ENCODE measurements at regions of chr17 and their contacts with region 1.

Region 1: GRCh38 chr17:40536295-40537171 is 28.7 kb downstream of the CCR7 start:
- DNase-seq: peak; percentile 94
- H3K4me3 Mint-ChIP-seq: peak overlapping the region; percentile 40
- H3K27ac Mint-ChIP-seq: no peak overlapping the region
- H3K4me1 Mint-ChIP-seq: peaks cover 38% of the 10 kb centered on the region
- H3K27me3 Mint-ChIP-seq: no peaks in the 10 kb centered on the region
- CTCF ChIP-seq: no peak

Region 2: DNA sequence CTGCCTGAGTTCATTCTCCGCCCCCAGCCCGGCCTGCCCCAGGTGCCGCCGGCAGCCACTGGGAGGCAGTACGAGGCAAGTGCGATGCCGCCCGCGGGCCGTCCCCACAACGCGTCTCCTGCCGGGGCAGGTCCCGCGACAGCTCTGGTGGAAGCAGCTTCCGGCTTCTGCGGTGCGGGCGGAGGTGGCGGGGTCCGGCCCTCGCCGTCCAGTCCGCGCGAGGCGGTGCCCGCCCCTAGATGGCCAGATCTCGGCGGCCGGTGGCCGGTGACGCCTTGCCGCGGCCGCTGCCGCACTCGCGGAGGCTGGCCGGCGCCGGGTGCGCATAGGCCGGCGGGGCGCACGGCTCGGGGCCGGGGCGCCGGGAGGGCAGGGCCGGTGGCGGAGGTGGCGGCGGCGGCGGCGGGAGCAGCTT is 173.8 kb before region 1 on chr17:
- CTCF ChIA-PET with region 1: interaction called, 11 read pairs
- POLR2A ChIA-PET with region 1: interaction called, 3 read pairs
- intact Hi-C with region 1: loop called (anchors 1 kb)
- DNase-seq: peak; percentile 74
- H3K4me3 Mint-ChIP-seq: peak overlapping the region; percentile 69
- H3K27ac Mint-ChIP-seq: no peak overlapping the region
- H3K4me1 Mint-ChIP-seq: peaks cover 11% of the 10 kb centered on the region
- H3K27me3 Mint-ChIP-seq: no peaks in the 10 kb centered on the region
- CTCF ChIP-seq: peak; percentile 72

Region 3: DNA sequence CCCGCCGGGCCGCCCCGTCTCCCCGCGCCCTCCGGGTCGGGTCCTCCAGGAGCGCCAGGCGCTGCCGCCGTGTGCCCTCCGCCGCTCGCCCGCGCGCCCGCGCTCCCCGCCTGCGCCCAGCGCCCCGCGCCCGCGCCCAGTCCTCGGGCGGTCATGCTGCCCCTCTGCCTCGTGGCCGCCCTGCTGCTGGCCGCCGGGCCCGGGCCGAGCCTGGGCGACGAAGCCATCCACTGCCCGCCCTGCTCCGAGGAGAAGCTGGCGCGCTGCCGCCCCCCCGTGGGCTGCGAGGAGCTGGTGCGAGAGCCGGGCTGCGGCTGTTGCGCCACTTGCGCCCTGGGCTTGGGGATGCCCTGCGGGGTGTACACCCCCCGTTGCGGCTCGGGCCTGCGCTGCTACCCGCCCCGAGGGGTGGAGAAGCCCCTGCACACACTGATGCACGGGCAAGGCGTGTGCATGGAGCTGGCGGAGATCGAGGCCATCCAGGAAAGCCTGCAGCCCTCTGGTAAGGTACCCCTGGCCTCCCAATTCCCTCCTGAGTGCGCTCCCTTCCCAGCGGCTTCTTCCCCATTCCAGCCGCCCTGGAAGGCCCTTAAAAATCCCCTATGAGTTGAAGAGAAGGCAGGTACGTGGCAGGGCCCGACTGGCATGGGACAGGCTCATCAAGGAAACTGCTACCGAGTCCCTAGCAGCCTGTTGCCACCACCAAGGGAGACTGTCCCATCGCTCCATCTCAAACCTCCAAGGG is 92.8 kb before region 1 on chr17:
- CTCF ChIA-PET with region 1: interaction called, 97 read pairs
- POLR2A ChIA-PET with region 1: interaction called, 8 read pairs
- intact Hi-C with region 1: loop called (anchors 1 kb)
- DNase-seq: peak; percentile 72
- H3K4me3 Mint-ChIP-seq: peak overlapping the region; percentile 65
- H3K27ac Mint-ChIP-seq: no peak overlapping the region
- H3K4me1 Mint-ChIP-seq: peaks cover 21% of the 10 kb centered on the region
- H3K27me3 Mint-ChIP-seq: peaks cover 31% of the 10 kb centered on the region
- CTCF ChIP-seq: peak; percentile 6

Region 4: GRCh38 chr17:40450175-40450574 is 86.4 kb before region 1 on chr17:
- CTCF ChIA-PET with region 1: interaction called, 12 read pairs
- POLR2A ChIA-PET with region 1: no interaction called
- intact Hi-C with region 1: no loop called
- DNase-seq: peak; percentile 65
- H3K4me3 Mint-ChIP-seq: no peak overlapping the region
- H3K27ac Mint-ChIP-seq: no peak overlapping the region
- H3K4me1 Mint-ChIP-seq: peaks cover 29% of the 10 kb centered on the region
- H3K27me3 Mint-ChIP-seq: peaks cover 21% of the 10 kb centered on the region
- CTCF ChIP-seq: peak; percentile 40

Region 5: GRCh38 chr17:40490289-40490853 is 46.2 kb before region 1 on chr17:
- CTCF ChIA-PET with region 1: interaction called, 9 read pairs
- POLR2A ChIA-PET with region 1: interaction called, 472 read pairs
- intact Hi-C with region 1: loop called (anchors 1 kb)
- DNase-seq: peak; percentile 93
- H3K4me3 Mint-ChIP-seq: peak overlapping the region; percentile 98
- H3K27ac Mint-ChIP-seq: peak overlapping the region; percentile 83
- H3K4me1 Mint-ChIP-seq: peaks cover 70% of the 10 kb centered on the region
- H3K27me3 Mint-ChIP-seq: no peaks in the 10 kb centered on the region
- CTCF ChIP-seq: no peak

Region 6: GRCh38 chr17:40522250-40522952 is 14.1 kb before region 1 on chr17:
- CTCF ChIA-PET with region 1: interaction called, 34 read pairs
- POLR2A ChIA-PET with region 1: interaction called, 21 read pairs
- intact Hi-C with region 1: no loop called
- DNase-seq: peak; percentile 53
- H3K4me3 Mint-ChIP-seq: peak overlapping the region; percentile 62
- H3K27ac Mint-ChIP-seq: peak overlapping the region; percentile 99
- H3K4me1 Mint-ChIP-seq: peaks cover 57% of the 10 kb centered on the region
- H3K27me3 Mint-ChIP-seq: no peaks in the 10 kb centered on the region
- CTCF ChIP-seq: no peak

Region 7: DNA sequence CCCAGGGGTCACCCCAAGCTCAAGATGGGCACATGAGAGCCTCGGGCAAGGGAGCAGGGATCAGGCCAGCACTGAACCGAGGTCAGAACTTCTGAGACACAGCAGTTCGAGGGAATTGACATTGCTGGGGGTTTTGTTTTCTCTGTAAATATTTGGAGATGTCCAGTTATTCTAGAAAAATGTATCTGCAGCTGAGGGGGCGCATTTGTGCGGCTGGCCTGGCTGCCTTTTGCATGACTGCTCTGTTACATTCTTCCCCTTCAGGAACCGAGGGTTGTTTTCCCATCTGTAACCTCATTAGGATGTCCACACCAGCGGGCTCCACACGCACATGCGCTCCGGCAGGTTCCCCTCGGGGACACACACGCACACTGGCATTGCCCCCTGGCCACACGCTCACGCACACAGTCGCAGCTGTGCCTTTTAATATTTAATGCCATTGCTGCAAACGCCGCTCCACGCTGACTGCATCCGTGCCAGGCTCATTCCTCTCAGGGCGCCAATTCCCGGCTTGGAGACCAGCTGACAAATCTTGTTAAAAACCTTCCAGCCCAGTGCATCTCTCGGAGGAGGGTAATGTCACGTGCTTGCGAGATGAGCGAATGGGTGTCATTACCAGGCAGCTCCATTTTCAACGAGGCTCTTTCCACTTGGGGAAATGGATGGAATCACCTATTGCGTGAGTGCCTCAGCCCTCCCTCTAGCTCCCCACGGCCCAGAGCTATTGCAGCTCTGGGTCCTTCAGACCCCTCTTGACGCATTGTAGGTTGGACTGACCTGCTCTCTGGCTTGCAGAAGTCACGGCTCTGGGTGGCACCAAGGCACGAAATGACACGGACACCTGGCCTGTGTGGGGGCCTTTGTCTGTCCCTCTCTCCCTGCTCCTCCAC is 15.6 kb after region 1 on chr17:
- CTCF ChIA-PET with region 1: interaction called, 26 read pairs
- POLR2A ChIA-PET with region 1: interaction called, 49 read pairs
- intact Hi-C with region 1: no loop called
- DNase-seq: peak; percentile 65
- H3K4me3 Mint-ChIP-seq: no peak overlapping the region
- H3K27ac Mint-ChIP-seq: no peak overlapping the region
- H3K4me1 Mint-ChIP-seq: peaks cover 32% of the 10 kb centered on the region
- H3K27me3 Mint-ChIP-seq: no peaks in the 10 kb centered on the region
- CTCF ChIP-seq: no peak

Region 8: DNA sequence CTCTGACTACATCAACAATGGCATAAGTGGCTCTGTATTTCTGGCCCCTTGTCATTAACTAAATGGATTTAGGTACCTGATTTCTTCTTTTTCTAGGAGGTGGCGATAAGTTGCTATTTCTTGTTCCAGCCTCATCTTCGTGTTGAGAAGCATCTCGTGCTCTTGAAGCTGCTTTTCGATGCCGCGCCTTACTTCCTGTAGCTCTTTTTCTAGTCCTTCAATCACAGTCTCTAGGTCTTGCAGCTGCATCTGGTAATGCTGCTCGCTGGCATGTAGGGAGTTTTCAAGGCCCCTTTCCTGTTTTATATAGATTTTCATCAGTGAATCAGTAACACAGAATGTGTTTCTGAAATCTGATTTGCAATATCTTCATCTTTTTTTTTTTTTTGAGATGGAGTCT is 123.4 kb after region 1 on chr17:
- CTCF ChIA-PET with region 1: no interaction called
- POLR2A ChIA-PET with region 1: no interaction called
- intact Hi-C with region 1: no loop called
- DNase-seq: no peak
- H3K4me3 Mint-ChIP-seq: no peak overlapping the region
- H3K27ac Mint-ChIP-seq: no peak overlapping the region
- H3K4me1 Mint-ChIP-seq: peaks cover 2% of the 10 kb centered on the region
- H3K27me3 Mint-ChIP-seq: no peaks in the 10 kb centered on the region
- CTCF ChIP-seq: no peak

Measured in MCF 10A (cell line).